PC-9 (cell line): ENCODE measurements at regions of chrX and their contacts with region 1.

Region 1: GRCh38 chrX:53714580-53715345 is 28.2 kb upstream of the HUWE1 start:
- DNase-seq: peak; percentile 77 to 84
- H3K4me3 ChIP-seq: no peak overlapping the region
- H3K27ac ChIP-seq: peak overlapping the region; percentile 81
- H3K4me1 ChIP-seq: peaks cover 33% of the 10 kb centered on the region
- H3K27me3 ChIP-seq: no peaks in the 10 kb centered on the region
- CTCF ChIP-seq: no peak

Region 2: DNA sequence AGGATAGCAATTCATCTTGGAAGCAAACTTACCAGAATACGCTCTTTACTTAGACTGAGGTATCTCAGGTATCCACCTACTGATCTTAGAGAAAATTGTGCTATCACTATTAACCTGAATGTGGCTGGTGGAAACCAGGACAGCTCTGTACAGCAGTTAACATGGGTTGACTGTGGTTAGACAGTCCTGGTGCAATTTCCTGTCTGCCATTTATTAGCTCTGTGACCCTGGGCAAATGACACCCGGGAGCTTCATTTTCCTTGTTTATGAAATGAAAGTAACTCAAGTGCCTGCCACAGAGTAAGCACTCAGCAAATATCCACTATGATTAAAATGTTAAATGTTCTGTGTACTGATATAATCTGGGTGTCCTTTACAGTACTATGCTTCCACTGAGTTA is 352.3 kb before region 1 on chrX:
- CTCF ChIA-PET with region 1: no interaction called
- POLR2A ChIA-PET with region 1: interaction called, 12 read pairs
- intact Hi-C with region 1: no loop called
- DNase-seq: no peak
- H3K4me3 ChIP-seq: no peak overlapping the region
- H3K27ac ChIP-seq: no peak overlapping the region
- H3K4me1 ChIP-seq: no peaks in the 10 kb centered on the region
- H3K27me3 ChIP-seq: no peaks in the 10 kb centered on the region
- CTCF ChIP-seq: no peak

Region 3: DNA sequence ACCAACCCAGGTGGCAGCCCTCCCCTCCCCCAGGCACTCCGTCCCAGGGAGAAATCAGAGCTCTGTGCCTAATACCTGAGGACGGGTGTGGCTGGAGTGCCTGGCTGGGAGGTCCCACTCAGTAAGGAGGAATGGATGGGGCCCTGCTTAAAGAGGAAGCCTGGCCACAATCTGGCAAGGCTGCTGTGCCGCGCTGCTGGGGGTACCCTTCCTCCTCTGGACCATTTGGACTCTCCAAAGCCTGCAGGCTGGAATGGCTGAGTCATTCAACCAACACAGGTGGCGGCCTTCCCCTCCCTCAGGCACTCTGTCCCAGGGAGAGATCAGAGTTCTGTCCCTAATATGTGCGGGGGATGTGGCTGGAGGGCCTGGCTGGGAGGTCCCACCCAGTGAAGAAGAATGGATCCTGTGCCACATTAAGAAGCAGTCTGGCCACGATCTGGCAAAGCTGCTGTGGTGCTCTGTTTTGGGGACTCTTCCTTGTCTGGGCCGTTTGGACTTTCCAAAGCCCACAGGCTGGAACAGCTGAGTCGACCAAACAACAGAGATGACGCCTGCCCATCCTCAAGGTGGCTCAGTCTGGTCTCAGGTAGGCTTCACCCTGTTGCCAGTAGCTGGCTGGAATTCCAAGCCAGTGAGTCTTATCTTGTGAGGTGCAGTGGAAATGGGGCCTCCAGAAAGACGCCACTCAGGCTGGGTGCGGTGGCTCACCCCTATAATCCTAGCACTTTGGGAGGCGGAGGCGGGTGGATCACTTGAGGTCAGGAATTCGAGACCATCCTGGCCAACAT is 99.1 kb after region 1 on chrX:
- CTCF ChIA-PET with region 1: no interaction called
- POLR2A ChIA-PET with region 1: interaction called, 3 read pairs
- intact Hi-C with region 1: loop called (anchors 1 kb)
- DNase-seq: peak; percentile 61 to 81
- H3K4me3 ChIP-seq: no peak overlapping the region
- H3K27ac ChIP-seq: no peak overlapping the region
- H3K4me1 ChIP-seq: no peaks in the 10 kb centered on the region; the same call in 1 of the 2 replicates
- H3K27me3 ChIP-seq: no peaks in the 10 kb centered on the region
- CTCF ChIP-seq: no peak

Region 4: GRCh38 chrX:53831662-53832635 is 117.2 kb after region 1 on chrX:
- CTCF ChIA-PET with region 1: no interaction called
- POLR2A ChIA-PET with region 1: no interaction called
- intact Hi-C with region 1: loop called (anchors 1 kb)
- DNase-seq: peak in 1 of 2 experiments; percentile 62
- H3K4me3 ChIP-seq: no peak overlapping the region
- H3K27ac ChIP-seq: no peak overlapping the region
- H3K4me1 ChIP-seq: no peaks in the 10 kb centered on the region
- H3K27me3 ChIP-seq: no peaks in the 10 kb centered on the region
- CTCF ChIP-seq: peak; percentile 65